ENCODE measurements at regions of chr2 and their contacts with region 1.

Region 1: GRCh38 chr2:20516646-20517341 is 69.9 kb downstream of the RHOB start:
- DNase-seq: peak; percentile 72
- H3K4me3 Mint-ChIP-seq: peak overlapping the region; percentile 12
- H3K27ac Mint-ChIP-seq: peak overlapping the region; percentile 99
- H3K4me1 Mint-ChIP-seq: peaks cover 56% of the 10 kb centered on the region
- H3K27me3 Mint-ChIP-seq: no peaks in the 10 kb centered on the region
- CTCF ChIP-seq: no peak

Region 2: GRCh38 chr2:20584637-20585321 is 68.0 kb after region 1 on chr2:
- CTCF ChIA-PET with region 1: interaction called, 9 read pairs
- intact Hi-C with region 1: loop called (anchors 5 kb)
- DNase-seq: peak; percentile 86
- H3K4me3 Mint-ChIP-seq: no peak overlapping the region
- H3K27ac Mint-ChIP-seq: peak overlapping the region; percentile 39
- H3K4me1 Mint-ChIP-seq: peaks cover 30% of the 10 kb centered on the region
- H3K27me3 Mint-ChIP-seq: no peaks in the 10 kb centered on the region
- CTCF ChIP-seq: no peak